ENCODE measurements at regions of chr1 and their contacts with region 1.

Region 1: GRCh38 chr1:6646499-6647148 is 22.0 kb downstream of the THAP3 start:
- DNase-seq: peak; percentile 4
- H3K4me3 ChIP-seq: no peak overlapping the region
- CTCF ChIP-seq: peak; percentile 50

Region 2: DNA sequence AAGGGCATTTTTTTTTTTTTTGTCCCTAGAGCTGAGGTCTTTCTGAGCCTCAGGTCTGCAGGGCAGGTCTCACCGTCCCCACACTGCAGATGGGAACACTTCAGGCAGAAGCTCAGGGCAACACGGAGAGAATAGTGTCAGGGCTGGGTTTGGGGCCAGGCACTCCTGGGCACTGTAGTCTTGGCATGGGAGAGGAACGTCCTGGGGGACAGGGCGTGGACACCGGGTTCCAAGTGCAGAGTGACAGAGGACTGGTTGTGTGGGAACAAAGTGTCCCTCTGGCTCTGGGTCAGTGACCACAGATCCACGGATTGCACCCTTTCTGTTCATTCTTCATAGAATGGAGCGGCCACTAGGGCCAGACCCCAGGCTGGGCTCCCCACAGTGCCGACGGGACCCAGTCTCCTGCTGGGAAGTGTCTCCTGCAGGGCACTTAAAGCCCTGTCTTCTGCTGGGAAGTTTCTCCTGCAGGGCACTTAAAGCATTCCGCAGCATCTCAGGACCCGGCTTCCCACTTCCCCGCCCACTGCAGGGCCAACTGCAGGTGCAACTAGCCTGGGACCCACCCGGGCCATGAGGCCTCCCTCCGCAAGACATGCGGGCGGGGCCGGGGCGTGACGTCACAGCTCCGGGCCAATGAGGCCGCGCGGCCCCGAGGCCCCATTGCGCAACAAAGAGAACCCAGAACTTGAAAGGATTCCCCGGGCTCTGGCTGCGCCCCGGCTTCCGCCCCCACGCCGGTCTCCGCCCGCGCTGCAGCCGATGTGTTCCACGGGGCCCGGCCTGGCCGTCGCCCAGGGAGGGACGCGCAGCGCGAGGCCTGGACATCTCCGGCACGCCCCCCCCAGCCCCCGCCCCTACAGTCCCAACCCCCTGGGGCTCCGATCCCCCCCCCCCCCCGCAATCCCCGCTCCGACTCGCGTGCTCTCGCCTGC is 386.9 kb before region 1 on chr1:
- CTCF ChIA-PET with region 1: no interaction called
- POLR2A ChIA-PET with region 1: no interaction called
- DNase-seq: no peak
- H3K4me3 ChIP-seq: peak overlapping the region; percentile 60
- CTCF ChIP-seq: no peak

Region 3: GRCh38 chr1:6287431-6287886 is 359.2 kb before region 1 on chr1:
- CTCF ChIA-PET with region 1: no interaction called
- POLR2A ChIA-PET with region 1: no interaction called
- DNase-seq: no peak
- H3K4me3 ChIP-seq: no peak overlapping the region
- CTCF ChIP-seq: no peak

Region 4: GRCh38 chr1:6614929-6615785 is 31.5 kb before region 1 on chr1:
- CTCF ChIA-PET with region 1: interaction called, 12 read pairs
- POLR2A ChIA-PET with region 1: no interaction called
- DNase-seq: no peak
- H3K4me3 ChIP-seq: peak overlapping the region; percentile 74
- CTCF ChIP-seq: no peak

Region 5: DNA sequence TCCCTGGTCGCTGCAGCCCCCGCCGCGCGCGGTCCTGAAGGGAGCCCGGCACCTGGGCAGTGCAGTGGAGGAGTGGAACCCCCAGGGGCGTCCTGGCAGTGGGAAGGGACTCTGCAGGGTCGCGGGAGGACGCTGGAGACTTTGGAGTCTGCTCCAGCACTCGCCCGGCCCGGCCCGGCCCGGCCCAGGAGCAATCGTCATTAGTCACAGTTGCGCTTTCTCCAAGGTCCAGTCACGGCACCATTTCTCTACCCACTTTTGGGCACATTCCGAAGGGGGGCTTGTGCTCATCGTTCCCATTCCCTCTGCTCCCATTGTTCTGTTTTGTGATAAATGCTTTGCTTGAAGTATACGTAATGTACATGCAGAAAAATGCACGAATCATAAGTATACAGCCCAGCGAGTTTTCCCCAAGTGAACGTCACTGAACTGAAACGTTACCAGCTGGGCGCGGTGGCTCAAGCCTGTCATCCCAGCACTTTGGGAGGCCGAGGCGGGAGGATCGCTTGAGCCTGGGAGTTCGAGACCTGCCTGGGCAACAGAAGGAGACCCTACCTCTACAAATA is 21.0 kb before region 1 on chr1:
- CTCF ChIA-PET with region 1: interaction called, 17 read pairs
- POLR2A ChIA-PET with region 1: no interaction called
- DNase-seq: no peak
- H3K4me3 ChIP-seq: peak overlapping the region; percentile 70
- CTCF ChIP-seq: no peak

Region 6: DNA sequence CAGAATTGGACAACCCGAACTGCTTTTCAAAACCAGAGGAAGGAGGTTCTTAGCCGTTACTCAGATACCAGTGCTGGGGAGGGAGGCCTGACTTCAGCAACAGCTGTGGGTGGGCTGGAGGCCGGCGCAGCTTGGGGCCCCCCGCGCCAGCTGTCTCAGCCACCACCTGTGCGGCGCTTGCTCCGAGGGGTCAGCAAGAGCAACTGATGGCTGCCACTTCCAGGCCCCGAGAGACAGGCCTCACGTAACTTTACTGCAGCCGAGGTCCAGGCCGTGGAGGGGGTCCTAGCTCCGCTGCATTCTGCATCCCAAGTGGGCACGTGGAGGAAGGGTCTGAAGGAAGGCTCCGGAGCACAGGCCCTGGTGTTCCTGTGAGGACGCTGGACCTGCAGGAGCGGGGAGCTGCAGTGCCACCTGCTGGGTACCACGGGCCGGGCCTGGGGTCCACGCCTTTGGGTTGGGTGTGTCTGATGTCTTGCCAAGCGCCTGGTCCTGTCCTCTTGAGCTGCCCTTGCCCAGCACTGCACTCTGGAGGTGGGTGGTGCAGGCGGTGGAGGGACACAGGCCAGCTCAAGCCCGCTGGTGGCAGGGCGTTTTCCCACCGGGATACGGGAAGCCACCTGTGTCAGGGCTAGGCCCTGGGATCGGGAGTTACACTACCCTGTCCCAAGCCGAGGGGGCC is 12.1 kb before region 1 on chr1:
- CTCF ChIA-PET with region 1: interaction called, 69 read pairs
- POLR2A ChIA-PET with region 1: interaction called, 3 read pairs
- DNase-seq: no peak
- H3K4me3 ChIP-seq: no peak overlapping the region
- CTCF ChIP-seq: peak; percentile 66

Measured in AG04449 (cell line).